Psoas muscle (tissue), 8 donors: ENCODE measurements at regions of chr10 and their contacts with region 1.

Region 1: DNA sequence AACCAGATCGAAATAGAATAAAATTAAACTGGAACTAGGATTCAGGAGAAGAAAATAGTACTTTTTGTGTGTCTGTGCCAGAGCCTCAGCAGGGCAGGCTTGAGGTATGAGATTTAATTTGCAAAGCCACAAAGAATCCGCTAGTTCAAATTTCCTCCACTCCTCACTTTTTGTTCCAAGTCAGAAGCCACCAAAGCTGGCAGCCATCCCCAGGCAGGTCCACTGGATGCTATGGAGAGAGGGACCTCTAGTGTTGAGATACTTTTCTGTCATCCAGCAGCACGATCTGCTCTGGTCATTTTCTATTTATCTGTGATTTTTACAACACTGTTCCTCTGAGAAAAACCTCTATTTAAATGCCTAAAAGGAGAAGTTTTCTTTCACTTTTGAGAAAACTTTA is 147.9 kb upstream of the FRMD4A start:
- DNase-seq: peak; percentile 67 to 76
- ATAC-seq: peak in 2 of 4 donors; percentile 45 to 65
- H3K4me3 ChIP-seq: no peak overlapping the region
- H3K27ac ChIP-seq: no peak overlapping the region
- H3K4me1 ChIP-seq: no peaks in the 10 kb centered on the region
- H3K27me3 ChIP-seq: no peaks in the 10 kb centered on the region
- CTCF ChIP-seq: peak; percentile 40

Region 2: DNA sequence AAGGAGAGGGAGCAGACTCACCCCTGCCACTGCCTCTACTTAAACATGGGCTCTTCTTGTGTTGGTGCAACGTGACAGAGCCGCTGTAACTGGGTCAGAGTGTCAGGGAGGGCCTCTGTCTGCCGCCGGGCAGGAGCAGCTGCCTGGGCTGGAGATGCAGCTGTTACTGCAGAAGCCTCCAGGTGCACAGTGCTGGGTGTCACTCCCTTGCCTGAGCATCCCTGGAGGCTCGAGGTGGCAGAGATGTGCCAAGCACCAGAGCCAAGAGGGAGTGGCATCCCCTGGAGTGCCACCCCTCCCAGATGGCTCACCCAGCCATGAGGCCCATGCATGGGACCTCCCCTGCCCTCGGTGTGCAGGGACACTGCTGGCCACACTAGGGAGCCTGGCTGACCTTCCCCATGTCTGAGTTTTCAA is 746.1 kb before region 1 on chr10:
- intact Hi-C with region 1: no loop called
- DNase-seq: no peak
- ATAC-seq: peak in 1 of 4 donors; percentile 20
- H3K4me3 ChIP-seq: no peak overlapping the region
- H3K27ac ChIP-seq: no peak overlapping the region
- H3K4me1 ChIP-seq: no peaks in the 10 kb centered on the region
- H3K27me3 ChIP-seq: no peaks in the 10 kb centered on the region
- CTCF ChIP-seq: no peak

Region 3: DNA sequence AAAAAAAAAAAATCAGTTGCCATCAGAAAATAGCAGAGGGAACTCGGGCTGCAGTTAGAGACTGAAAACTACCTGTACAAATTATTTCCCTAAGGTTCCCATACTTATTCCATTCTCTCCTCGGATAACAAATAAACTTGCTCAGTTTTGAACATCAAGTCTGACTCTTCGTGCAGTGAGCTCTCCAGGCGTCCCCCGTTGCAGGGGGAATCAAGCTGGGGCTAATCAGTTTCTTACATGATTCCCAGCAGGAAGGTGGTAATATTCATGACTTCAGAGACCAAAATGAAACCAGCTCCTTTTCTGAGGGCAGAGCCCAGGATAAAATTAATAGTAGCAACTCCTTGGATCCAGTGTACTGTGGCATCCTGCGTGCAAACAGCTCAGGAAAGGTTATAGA is 283.2 kb before region 1 on chr10:
- intact Hi-C with region 1: loop called in 1 of 2 experiments (anchors 5 kb)
- DNase-seq: no peak
- ATAC-seq: no peak
- H3K4me3 ChIP-seq: no peak overlapping the region
- H3K27ac ChIP-seq: no peak overlapping the region
- H3K4me1 ChIP-seq: no peaks in the 10 kb centered on the region
- H3K27me3 ChIP-seq: no peaks in the 10 kb centered on the region
- CTCF ChIP-seq: no peak